GM10248 (cell line): ENCODE measurements at regions of chr12 and their contacts with region 1.

Region 1: GRCh38 chr12:113174461-113175384 is 10.6 kb downstream of the DDX54 start:
- DNase-seq: peak; percentile 89
- CTCF ChIP-seq: peak; percentile 99

Region 2: GRCh38 chr12:112992541-112993398 is 182.0 kb before region 1 on chr12:
- CTCF ChIA-PET with region 1: interaction called, 20 read pairs
- POLR2A ChIA-PET with region 1: no interaction called
- DNase-seq: peak; percentile 67
- CTCF ChIP-seq: peak; percentile 73

Region 3: GRCh38 chr12:113065126-113066007 is 109.4 kb before region 1 on chr12:
- CTCF ChIA-PET with region 1: interaction called, 19 read pairs
- POLR2A ChIA-PET with region 1: no interaction called
- DNase-seq: peak; percentile 67
- CTCF ChIP-seq: no peak

Region 4: DNA sequence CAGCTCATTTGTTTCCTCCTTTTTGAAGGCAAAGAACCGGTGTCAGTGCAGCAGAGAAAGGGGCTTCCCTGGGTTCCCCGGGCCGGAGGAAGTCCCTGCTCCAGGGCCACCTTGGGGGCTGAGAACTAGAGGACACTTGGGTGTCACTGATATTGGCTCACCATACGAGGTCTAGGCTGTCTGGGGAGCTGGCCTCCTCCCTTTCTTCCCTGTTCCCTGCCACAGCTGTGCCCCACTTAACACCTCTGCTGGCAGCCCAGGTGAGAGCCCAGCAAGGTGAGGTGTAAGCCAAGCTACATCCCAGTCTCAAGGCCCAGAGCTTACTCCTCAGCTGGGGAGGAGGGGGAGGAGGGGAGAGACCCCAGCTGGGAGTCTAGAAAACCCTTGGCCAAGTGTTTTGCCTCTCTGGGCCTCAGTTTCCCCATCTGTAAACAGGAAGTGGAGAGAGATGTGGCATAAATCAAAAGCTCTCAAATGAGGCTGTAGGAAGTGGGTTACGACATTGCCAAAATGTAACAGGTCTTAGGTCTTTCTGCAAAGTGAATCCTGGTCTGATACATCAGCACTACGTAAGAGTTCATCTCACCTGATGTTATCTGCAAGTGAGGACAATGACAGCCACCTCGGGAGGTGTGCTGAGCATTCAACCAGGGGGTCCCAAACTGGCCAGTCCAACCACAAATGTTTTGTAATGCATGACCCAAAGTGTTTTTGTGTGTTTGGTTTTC is 64.7 kb before region 1 on chr12:
- CTCF ChIA-PET with region 1: interaction called, 15 read pairs
- POLR2A ChIA-PET with region 1: no interaction called
- DNase-seq: no peak
- CTCF ChIP-seq: no peak

Region 5: GRCh38 chr12:113152835-113153814 is 21.6 kb before region 1 on chr12:
- CTCF ChIA-PET with region 1: interaction called, 190 read pairs
- POLR2A ChIA-PET with region 1: no interaction called
- DNase-seq: peak; percentile 84
- CTCF ChIP-seq: peak; percentile 56

Region 6: GRCh38 chr12:113190761-113191160 is 16.0 kb after region 1 on chr12:
- CTCF ChIA-PET with region 1: interaction called, 23 read pairs
- POLR2A ChIA-PET with region 1: no interaction called
- DNase-seq: no peak
- CTCF ChIP-seq: no peak